ENCODE measurements at regions of chr5 and their contacts with region 1.

Region 1: DNA sequence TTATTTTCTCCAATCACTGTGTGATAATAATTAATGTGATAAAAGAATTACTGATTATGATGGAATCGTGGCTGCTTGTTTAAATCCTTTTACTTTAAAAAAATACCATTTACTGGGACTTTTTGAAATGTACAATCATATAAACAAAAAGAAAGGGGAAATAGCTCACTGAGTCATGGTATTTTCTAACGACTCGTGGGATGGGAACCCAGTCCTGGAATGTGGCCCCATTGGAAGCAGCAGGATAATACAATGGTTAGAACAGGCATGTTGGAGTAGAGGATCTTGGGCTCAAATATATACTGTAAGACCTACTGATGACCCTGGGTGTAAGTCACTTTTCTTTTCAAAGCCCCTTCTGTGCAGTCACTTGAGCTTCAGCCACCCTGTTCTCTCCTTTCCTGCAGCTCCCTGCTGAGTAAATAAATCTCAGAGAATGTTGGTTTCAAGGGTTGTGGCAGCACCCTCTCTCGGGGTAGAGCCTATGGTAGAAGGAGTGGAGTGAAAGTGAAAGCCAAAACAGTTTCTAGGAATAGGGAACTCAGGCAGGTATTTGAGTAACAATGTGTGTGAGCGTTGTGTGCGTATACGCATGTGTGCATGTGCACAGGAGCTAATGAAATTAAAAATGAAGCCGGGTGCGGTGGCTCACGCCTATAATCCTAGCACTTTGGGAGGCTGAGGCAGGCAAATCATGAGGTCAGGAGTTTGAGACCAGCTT is 40.8 kb upstream of the LARP1 start:
- DNase-seq: peak; percentile 16
- H3K4me3 Mint-ChIP-seq: peak overlapping the region; percentile 5
- H3K27ac Mint-ChIP-seq: peak overlapping the region; percentile 73
- H3K4me1 Mint-ChIP-seq: peaks cover 19% of the 10 kb centered on the region
- H3K27me3 Mint-ChIP-seq: no peaks in the 10 kb centered on the region
- CTCF ChIP-seq: no peak

Region 2: GRCh38 chr5:154697371-154697770 is 17.1 kb before region 1 on chr5:
- CTCF ChIA-PET with region 1: interaction called, 6 read pairs
- POLR2A ChIA-PET with region 1: interaction called, 13 read pairs
- intact Hi-C with region 1: no loop called
- DNase-seq: no peak
- H3K4me3 Mint-ChIP-seq: no peak overlapping the region
- H3K27ac Mint-ChIP-seq: no peak overlapping the region
- H3K4me1 Mint-ChIP-seq: peaks cover 11% of the 10 kb centered on the region
- H3K27me3 Mint-ChIP-seq: no peaks in the 10 kb centered on the region
- CTCF ChIP-seq: no peak

Region 3: DNA sequence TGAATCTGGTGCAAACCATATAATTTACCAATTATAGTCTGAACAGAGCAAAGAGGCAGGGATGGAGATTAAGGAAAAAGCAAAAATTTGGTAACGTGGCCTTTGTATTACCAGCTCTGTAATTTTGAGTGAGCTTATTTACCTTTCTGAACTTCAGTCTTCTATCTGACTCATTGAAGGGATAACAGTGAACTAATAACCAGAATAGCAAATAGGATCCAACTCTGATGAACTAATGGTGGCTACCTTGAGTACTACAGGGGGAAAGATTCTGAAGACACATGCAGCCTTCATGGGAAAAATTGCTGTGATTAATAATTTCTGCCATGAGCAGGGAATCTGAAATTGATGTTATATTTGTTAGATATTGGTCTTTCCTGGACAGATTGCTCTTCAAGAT is 17.8 kb after region 1 on chr5:
- CTCF ChIA-PET with region 1: interaction called, 19 read pairs
- POLR2A ChIA-PET with region 1: interaction called, 3 read pairs
- intact Hi-C with region 1: no loop called
- DNase-seq: no peak
- H3K4me3 Mint-ChIP-seq: no peak overlapping the region
- H3K27ac Mint-ChIP-seq: no peak overlapping the region
- H3K4me1 Mint-ChIP-seq: peaks cover 3% of the 10 kb centered on the region
- H3K27me3 Mint-ChIP-seq: no peaks in the 10 kb centered on the region
- CTCF ChIP-seq: no peak

Region 4: DNA sequence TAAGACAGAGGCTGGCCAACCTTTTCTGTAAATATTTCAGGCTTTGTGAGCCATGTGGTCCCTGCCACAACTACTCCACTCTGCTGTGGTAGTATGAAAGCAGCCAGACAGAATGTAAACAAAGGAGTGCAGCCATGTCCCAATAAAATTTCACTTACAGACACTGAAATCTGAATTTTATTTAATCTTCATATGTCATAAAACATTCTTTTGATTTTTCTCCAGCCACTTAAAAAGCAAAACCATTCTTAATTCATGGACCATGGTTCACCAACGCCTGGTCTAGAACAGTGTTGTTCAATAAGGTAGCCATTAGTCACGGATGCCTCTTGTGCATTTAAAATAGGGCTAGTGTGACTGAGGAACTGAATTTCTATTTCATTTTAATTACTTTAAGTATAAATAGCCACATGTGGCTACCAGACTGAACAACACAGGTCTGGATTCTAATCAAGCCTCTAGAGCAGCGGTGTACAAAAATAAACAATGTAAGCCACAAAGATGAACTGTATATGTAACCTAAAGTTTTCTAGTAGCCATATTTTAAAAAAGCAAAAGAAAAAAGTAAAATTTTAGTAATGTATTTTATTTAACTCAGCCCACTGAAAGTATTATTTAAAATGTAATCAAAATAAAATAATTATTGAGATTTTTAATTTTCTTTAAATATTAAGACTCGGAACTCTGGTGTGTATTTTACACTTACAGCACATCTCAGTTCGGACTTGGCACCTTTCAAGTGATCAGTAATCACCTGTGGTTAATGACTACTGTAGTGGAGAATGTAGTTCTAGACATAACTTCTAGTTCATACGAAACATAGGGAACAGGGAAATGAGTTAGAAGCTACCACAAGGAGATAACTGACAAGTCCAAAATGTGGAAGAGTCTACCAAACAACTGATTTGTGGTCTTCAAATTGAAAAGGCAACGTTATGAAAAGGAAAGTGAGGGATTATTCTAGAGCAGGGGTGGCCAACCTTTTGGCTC is 209.3 kb after region 1 on chr5:
- CTCF ChIA-PET with region 1: no interaction called
- POLR2A ChIA-PET with region 1: no interaction called
- intact Hi-C with region 1: no loop called
- DNase-seq: no peak
- H3K4me3 Mint-ChIP-seq: no peak overlapping the region
- H3K27ac Mint-ChIP-seq: no peak overlapping the region
- H3K4me1 Mint-ChIP-seq: no peaks in the 10 kb centered on the region
- H3K27me3 Mint-ChIP-seq: no peaks in the 10 kb centered on the region
- CTCF ChIP-seq: no peak

Region 5: GRCh38 chr5:154972476-154973080 is 258.2 kb after region 1 on chr5:
- CTCF ChIA-PET with region 1: no interaction called
- POLR2A ChIA-PET with region 1: no interaction called
- intact Hi-C with region 1: no loop called
- DNase-seq: peak; percentile 66
- H3K4me3 Mint-ChIP-seq: no peak overlapping the region
- H3K27ac Mint-ChIP-seq: no peak overlapping the region
- H3K4me1 Mint-ChIP-seq: no peaks in the 10 kb centered on the region
- H3K27me3 Mint-ChIP-seq: no peaks in the 10 kb centered on the region
- CTCF ChIP-seq: peak; percentile 68